Gastrocnemius medialis (tissue), 4 donors: ENCODE measurements at regions of chr13 and their contacts with region 1.

Region 1: DNA sequence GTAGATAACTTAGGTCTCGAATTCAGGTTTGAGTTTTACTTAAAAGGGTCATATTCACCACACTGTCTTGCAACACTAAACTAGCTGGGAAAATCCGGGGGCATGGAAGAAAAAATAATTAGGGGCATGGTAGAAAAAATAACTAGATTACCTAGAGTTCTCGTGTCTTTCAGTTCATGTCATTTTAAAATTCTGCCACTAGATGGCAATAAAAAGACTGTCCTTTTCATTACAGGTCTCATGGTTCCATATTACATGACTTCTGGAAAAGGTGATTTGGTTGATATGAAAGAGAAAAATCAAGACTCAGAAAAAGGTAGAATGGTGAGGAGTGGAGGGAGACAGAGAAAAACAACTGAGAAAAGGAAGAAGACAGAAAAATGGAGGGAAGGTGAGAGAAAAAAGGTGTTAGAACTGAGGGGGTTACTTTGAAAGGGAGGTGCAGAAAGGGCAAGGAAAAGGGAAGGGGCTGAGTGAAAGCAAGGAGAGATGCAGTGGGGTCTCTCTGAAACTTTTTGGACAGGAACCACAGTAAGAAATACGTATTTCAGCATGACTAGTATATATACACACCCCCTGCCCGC is 299.0 kb downstream of the KLF12 start:
- DNase-seq: no peak
- ATAC-seq: peak; percentile 54 to 60
- H3K4me3 ChIP-seq: no peak overlapping the region
- H3K27ac ChIP-seq: no peak overlapping the region
- H3K4me1 ChIP-seq: peaks cover 3 to 7% of the 10 kb centered on the region in 2 donors
- H3K27me3 ChIP-seq: no peaks in the 10 kb centered on the region
- CTCF ChIP-seq: peak in 4 of 5 experiments; percentile 59 to 73 (median 64)
- POLR2A ChIP-seq: no peak

Region 2: DNA sequence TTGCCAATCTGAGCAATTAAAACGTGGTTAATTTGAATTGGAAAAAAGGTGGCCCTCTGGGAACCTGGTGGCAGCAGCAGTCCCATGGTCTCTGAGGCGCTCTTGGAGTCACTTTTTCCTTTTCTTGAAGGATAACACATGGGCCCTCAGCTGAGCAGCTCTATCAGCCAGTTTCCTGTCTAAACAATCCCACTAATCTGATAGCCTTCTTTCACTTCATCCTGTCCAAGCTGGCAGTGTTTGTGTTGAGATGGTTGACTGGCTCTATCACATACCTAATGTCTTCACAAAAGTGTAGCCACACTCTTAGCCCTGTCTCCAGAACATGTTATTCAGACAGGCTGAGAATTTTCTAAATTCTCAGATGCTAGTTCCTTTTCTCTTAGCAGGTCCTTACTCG is 1118.5 kb before region 1 on chr13:
- in situ Hi-C with region 1: no loop called
- intact Hi-C with region 1: no loop called
- DNase-seq: no peak
- ATAC-seq: no peak
- H3K4me3 ChIP-seq: no peak overlapping the region
- H3K27ac ChIP-seq: no peak overlapping the region
- H3K4me1 ChIP-seq: no peaks in the 10 kb centered on the region
- H3K27me3 ChIP-seq: no peaks in the 10 kb centered on the region
- CTCF ChIP-seq: no peak
- POLR2A ChIP-seq: no peak

Region 3: GRCh38 chr13:72890546-72890945 is 944.7 kb before region 1 on chr13:
- in situ Hi-C with region 1: no loop called
- intact Hi-C with region 1: loop called (anchors 5 kb)
- DNase-seq: no peak
- ATAC-seq: no peak
- H3K4me3 ChIP-seq: no peak overlapping the region
- H3K27ac ChIP-seq: no peak overlapping the region
- H3K4me1 ChIP-seq: peaks cover 0 to 10% of the 10 kb centered on the region in 2 donors
- H3K27me3 ChIP-seq: no peaks in the 10 kb centered on the region
- CTCF ChIP-seq: no peak
- POLR2A ChIP-seq: no peak

Region 4: GRCh38 chr13:74287724-74288169 is 452.5 kb after region 1 on chr13:
- in situ Hi-C with region 1: loop called in 3 of 4 experiments (anchors 5 to 25 kb)
- intact Hi-C with region 1: loop called (anchors 1 kb)
- DNase-seq: peak; percentile 26 to 43
- ATAC-seq: no peak
- H3K4me3 ChIP-seq: peak overlapping the region; percentile 8 to 28 (median 18)
- H3K27ac ChIP-seq: no peak overlapping the region
- H3K4me1 ChIP-seq: peaks cover 34 to 43% of the 10 kb centered on the region in 2 donors
- H3K27me3 ChIP-seq: no peaks in the 10 kb centered on the region
- CTCF ChIP-seq: no peak
- POLR2A ChIP-seq: no peak

Region 5: GRCh38 chr13:75219479-75220237 is 1384.4 kb after region 1 on chr13:
- in situ Hi-C with region 1: no loop called
- intact Hi-C with region 1: loop called (anchors 5 kb)
- DNase-seq: peak; percentile 27 to 51
- ATAC-seq: peak; percentile 80 to 82
- H3K4me3 ChIP-seq: peak overlapping the region; percentile 3 to 37 (median 29)
- H3K27ac ChIP-seq: no peak overlapping the region
- H3K4me1 ChIP-seq: no peaks in the 10 kb centered on the region
- H3K27me3 ChIP-seq: no peaks in the 10 kb centered on the region
- CTCF ChIP-seq: peak; percentile 75 to 98 (median 86)
- POLR2A ChIP-seq: no peak